Activated CD4-positive, alpha-beta T cell treated with anti-CD3 and anti-CD28 coated beads for 36 hours (primary cell): ENCODE measurements at regions of chr3 and their contacts with region 1.

Region 1: GRCh38 chr3:99686955-99687612 is 48.7 kb downstream of the COL8A1 start:
- DNase-seq: peak; percentile 75
- ATAC-seq: no peak
- H3K4me3 Mint-ChIP-seq: no peak overlapping the region
- H3K27ac Mint-ChIP-seq: no peak overlapping the region
- H3K4me1 Mint-ChIP-seq: no peaks in the 10 kb centered on the region
- H3K27me3 Mint-ChIP-seq: peaks cover 7% of the 10 kb centered on the region

Region 2: GRCh38 chr3:99499235-99500158 is 187.6 kb before region 1 on chr3:
- CTCF ChIA-PET with region 1: interaction called, 7 read pairs
- POLR2A ChIA-PET with region 1: no interaction called
- intact Hi-C with region 1: loop called (anchors 1 to 5 kb)
- DNase-seq: peak; percentile 27
- ATAC-seq: no peak
- H3K4me3 Mint-ChIP-seq: no peak overlapping the region
- H3K27ac Mint-ChIP-seq: no peak overlapping the region
- H3K4me1 Mint-ChIP-seq: no peaks in the 10 kb centered on the region
- H3K27me3 Mint-ChIP-seq: no peaks in the 10 kb centered on the region

Region 3: DNA sequence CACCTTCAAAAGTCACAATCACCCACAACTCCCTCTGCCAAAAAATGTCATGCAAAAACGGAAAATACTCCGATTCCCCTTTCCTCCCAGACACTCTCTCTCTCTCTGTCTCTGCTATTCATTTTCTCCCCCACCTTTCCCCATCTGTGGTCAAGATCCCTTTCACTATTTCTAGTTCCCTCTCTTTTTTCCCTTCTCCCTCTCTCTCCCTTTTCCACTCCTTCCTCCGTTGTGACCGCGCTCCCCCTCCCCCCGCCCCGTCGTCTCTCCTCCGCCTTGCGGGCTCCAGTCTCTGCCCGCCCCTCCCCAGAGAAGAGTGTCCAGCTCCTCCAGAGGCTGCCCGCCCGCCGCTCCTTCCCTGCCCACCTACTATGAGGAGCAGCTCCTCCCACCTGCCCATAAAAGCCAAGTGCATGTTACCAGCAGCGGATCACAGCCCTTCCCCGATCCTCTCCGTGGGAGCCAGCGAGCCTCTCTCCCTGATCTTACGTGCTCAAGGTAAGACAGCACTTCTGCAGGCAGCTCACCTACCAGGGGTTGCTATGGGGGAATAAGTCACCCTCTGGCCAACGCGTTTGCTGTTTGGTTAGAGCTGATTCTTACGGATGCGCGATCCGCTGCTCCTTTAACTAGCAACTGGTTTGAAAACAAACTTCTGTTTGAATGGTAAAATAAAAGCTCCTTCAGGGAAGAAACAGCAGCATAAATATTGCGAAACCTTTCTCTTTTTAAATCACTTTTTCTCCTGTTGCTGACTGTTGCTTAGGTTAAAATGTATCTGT is 48.7 kb before region 1 on chr3 and contains the start of gene COL8A1:
- CTCF ChIA-PET with region 1: no interaction called
- POLR2A ChIA-PET with region 1: no interaction called
- intact Hi-C with region 1: no loop called
- DNase-seq: no peak
- ATAC-seq: no peak
- H3K4me3 Mint-ChIP-seq: peak within 1 kb of the TSS; percentile 45
- H3K27ac Mint-ChIP-seq: no peak within 1 kb of the TSS
- H3K4me1 Mint-ChIP-seq: peaks cover 13% of the 10 kb centered on the region
- H3K27me3 Mint-ChIP-seq: peaks cover 55% of the 10 kb centered on the region
- total RNA-seq, gene COL8A1: not detected

Region 4: GRCh38 chr3:100089812-100090668 is 403.0 kb after region 1 on chr3:
- CTCF ChIA-PET with region 1: no interaction called
- POLR2A ChIA-PET with region 1: no interaction called
- intact Hi-C with region 1: no loop called
- DNase-seq: peak; percentile 50
- ATAC-seq: peak; percentile 81
- H3K4me3 Mint-ChIP-seq: no peak overlapping the region
- H3K27ac Mint-ChIP-seq: no peak overlapping the region
- H3K4me1 Mint-ChIP-seq: peaks cover 21% of the 10 kb centered on the region
- H3K27me3 Mint-ChIP-seq: no peaks in the 10 kb centered on the region